B cell (primary cell): ENCODE measurements at regions of chr1 and their contacts with region 1.

Region 1: GRCh38 chr1:183622884-183623785 is 12.4 kb downstream of the ARPC5 start:
- DNase-seq: peak; percentile 80
- ATAC-seq: peak; percentile 96
- H3K4me3 ChIP-seq: no peak overlapping the region
- H3K4me3 Mint-ChIP-seq: no peak overlapping the region
- H3K27ac ChIP-seq: peak overlapping the region in 1 of 2 donors; percentile 44
- H3K27ac Mint-ChIP-seq: peak overlapping the region; percentile 42
- H3K4me1 ChIP-seq: peaks cover 2 to 9% of the 10 kb centered on the region in 2 donors
- H3K4me1 Mint-ChIP-seq: peaks cover 20% of the 10 kb centered on the region
- H3K27me3 ChIP-seq: no peaks in the 10 kb centered on the region
- H3K27me3 Mint-ChIP-seq: no peaks in the 10 kb centered on the region
- CTCF ChIP-seq: peak; percentile 80

Region 2: DNA sequence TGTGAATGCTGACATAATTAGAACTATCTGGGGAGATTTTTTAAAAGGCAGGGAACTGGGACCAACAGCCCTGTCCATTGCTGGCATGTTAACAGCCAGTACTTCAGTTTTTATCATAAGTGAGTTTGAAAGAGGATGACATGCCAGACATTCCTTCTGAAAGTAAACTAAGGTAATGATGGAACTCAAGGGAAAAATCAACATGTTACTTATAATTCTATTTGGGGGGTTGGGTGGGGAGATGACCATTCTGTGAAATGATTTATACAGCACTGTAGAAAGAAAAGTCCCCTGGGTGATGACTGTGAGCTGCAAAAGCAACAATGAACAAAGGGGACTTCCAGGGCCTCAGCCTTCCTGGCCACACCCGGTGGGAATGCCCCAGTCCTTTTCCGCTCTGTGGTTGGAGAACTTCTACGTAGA is 442.5 kb before region 1 on chr1:
- CTCF ChIA-PET with region 1: no interaction called
- POLR2A ChIA-PET with region 1: no interaction called
- intact Hi-C with region 1: no loop called
- DNase-seq: peak; percentile 24
- ATAC-seq: peak; percentile 24
- H3K4me3 ChIP-seq: no peak overlapping the region
- H3K4me3 Mint-ChIP-seq: no peak overlapping the region
- H3K27ac ChIP-seq: no peak overlapping the region
- H3K27ac Mint-ChIP-seq: no peak overlapping the region
- H3K4me1 ChIP-seq: peaks cover 5 to 11% of the 10 kb centered on the region in 2 donors
- H3K4me1 Mint-ChIP-seq: peaks cover 11% of the 10 kb centered on the region
- H3K27me3 ChIP-seq: peaks cover 0 to 6% (median 0%) of the 10 kb centered on the region in 4 experiments
- H3K27me3 Mint-ChIP-seq: peaks cover 3% of the 10 kb centered on the region
- CTCF ChIP-seq: no peak

Region 3: DNA sequence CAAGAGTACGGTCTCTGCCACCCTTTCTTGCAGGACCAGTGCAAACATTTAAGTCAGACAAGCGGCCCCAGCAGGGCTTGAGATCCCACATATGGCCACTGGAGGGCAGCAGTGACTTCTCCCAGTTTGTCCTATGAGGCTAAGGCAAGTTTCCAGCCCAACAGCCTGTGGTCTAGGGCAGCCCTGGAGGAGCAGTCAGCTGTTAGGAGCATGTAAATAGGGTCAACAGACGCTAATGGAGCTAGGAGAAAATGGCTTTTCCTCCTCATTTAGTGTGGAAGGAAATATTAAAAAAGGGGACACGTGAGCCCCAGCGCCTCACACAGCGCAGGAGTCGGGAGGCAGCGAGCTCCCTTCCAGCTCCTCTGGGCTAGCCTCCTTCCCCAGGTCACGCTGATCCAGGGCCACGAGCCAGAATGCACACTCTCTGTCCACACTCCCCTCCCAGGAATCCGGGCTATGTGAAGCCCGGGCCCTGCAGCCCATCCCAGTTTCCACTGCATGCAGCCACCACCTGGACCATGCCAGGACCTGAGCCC is 341.5 kb before region 1 on chr1:
- CTCF ChIA-PET with region 1: interaction called, 13 read pairs
- POLR2A ChIA-PET with region 1: no interaction called
- intact Hi-C with region 1: no loop called
- DNase-seq: peak; percentile 74
- ATAC-seq: peak; percentile 79
- H3K4me3 ChIP-seq: no peak overlapping the region
- H3K4me3 Mint-ChIP-seq: no peak overlapping the region
- H3K27ac ChIP-seq: no peak overlapping the region
- H3K27ac Mint-ChIP-seq: no peak overlapping the region
- H3K4me1 ChIP-seq: no peaks in the 10 kb centered on the region
- H3K4me1 Mint-ChIP-seq: no peaks in the 10 kb centered on the region
- H3K27me3 ChIP-seq: peaks cover 0 to 4% (median 0%) of the 10 kb centered on the region in 4 experiments
- H3K27me3 Mint-ChIP-seq: peaks cover 21% of the 10 kb centered on the region
- CTCF ChIP-seq: peak; percentile 86

Region 4: DNA sequence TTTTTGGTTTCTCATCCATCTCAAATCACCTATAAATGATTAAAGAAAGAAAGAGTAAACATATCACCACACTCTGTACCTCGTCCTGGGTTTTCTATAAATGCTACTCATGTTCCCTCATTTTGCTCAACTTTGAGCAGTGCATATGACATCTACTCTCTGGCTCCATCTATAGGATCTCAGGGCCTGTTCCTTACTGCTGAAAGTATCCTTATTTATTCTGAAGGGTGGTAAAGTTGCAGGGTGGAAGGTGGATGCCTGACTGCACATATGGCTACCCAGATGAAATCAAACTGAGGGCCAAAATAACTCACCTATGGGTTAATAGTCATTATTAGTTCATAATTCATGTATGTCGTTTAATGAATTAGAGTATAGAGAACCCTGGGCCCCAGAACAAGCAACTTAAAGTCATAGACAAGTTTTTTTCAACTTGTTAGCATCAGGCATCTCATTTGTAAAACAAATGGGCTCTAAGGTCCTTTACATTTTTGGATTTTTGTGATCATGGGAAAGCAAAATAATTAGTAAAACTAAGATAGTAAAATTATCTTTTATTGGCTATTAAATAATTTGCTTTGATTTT is 79.4 kb before region 1 on chr1:
- CTCF ChIA-PET with region 1: interaction called, 5 read pairs
- POLR2A ChIA-PET with region 1: no interaction called
- intact Hi-C with region 1: loop called (anchors 1 kb)
- DNase-seq: peak; percentile 59
- ATAC-seq: peak; percentile 63
- H3K4me3 ChIP-seq: no peak overlapping the region
- H3K4me3 Mint-ChIP-seq: no peak overlapping the region
- H3K27ac ChIP-seq: no peak overlapping the region
- H3K27ac Mint-ChIP-seq: no peak overlapping the region
- H3K4me1 ChIP-seq: peaks cover 4 to 5% of the 10 kb centered on the region in 2 donors
- H3K4me1 Mint-ChIP-seq: peaks cover 22% of the 10 kb centered on the region
- H3K27me3 ChIP-seq: no peaks in the 10 kb centered on the region
- H3K27me3 Mint-ChIP-seq: no peaks in the 10 kb centered on the region
- CTCF ChIP-seq: peak; percentile 67

Region 5: GRCh38 chr1:183580281-183580682 is 42.9 kb before region 1 on chr1:
- CTCF ChIA-PET with region 1: interaction called, 7 read pairs
- POLR2A ChIA-PET with region 1: no interaction called
- intact Hi-C with region 1: loop called (anchors 1 kb)
- DNase-seq: peak; percentile 85
- ATAC-seq: peak; percentile 89
- H3K4me3 ChIP-seq: peak overlapping the region in 3 of 5 experiments; percentile 5 to 34 (median 10)
- H3K4me3 Mint-ChIP-seq: peak overlapping the region; percentile 83
- H3K27ac ChIP-seq: peak overlapping the region; percentile 66 to 69
- H3K27ac Mint-ChIP-seq: peak overlapping the region; percentile 97
- H3K4me1 ChIP-seq: peaks cover 26 to 32% of the 10 kb centered on the region in 2 donors
- H3K4me1 Mint-ChIP-seq: peaks cover 23% of the 10 kb centered on the region
- H3K27me3 ChIP-seq: no peaks in the 10 kb centered on the region
- H3K27me3 Mint-ChIP-seq: no peaks in the 10 kb centered on the region
- CTCF ChIP-seq: no peak